ENCODE measurements at regions of chr2 and their contacts with region 1.

Region 1: DNA sequence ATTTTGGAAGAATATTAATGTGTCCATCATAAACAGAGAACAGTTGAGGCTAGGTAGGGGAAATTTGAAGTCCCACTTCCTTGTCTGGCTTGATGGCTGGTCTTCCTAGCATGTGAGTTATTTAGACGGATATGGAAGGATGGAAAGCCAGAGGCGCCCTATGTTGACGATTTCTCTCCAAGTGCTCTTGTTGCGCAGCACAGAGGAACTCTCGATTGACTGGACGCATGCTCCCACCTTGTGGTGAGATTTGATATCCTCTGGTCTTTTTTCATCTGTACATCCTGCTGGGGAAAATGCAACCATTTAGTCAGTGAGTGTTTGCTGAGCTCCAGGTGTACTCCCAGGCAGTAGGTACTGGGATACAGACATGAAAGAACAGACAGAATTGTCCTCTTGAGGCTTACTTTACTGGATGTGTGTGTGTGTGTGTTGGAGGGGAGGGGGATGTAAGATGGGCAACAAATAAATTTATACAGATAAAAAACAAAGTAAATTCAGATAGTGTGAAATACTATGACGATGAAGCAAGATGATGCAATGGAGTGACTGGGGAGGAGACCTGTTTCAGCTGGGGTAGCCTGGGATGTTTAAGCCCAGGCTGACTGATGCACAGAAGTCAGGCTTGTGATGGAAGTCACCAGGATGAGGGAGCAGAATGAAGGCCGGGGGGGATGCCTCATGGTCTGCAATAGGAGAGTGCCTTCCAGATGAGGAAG is 137.2 kb downstream of the TRIM43 start:
- DNase-seq: peak; percentile 75
- H3K4me3 ChIP-seq: no peak overlapping the region
- H3K27ac ChIP-seq: no peak overlapping the region
- H3K4me1 ChIP-seq: no peaks in the 10 kb centered on the region
- H3K27me3 ChIP-seq: peaks cover 2% of the 10 kb centered on the region
- CTCF ChIP-seq: peak; percentile 44 to 69

Region 2: DNA sequence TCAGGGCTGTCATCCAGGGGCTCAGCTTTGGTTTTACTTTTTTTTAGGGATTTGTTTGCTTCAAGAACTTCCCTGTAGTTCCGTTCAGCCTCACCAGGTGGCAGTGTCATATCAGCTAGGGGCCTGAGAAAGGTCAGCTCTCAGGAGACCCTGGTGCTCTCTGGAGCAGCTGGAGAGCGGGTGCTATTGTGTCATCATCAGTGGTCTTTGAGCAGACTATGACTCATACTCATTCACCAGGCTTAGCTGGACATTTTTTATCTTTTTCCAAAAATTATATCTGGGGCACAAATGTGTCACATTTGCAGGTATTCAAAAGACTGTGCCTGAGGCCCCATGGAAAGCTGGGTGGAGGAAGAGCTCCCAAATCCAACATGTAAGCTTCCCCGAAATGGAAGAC is 497.3 kb before region 1 on chr2:
- CTCF ChIA-PET with region 1: no interaction called
- dilution Hi-C with region 1: no loop called
- in situ Hi-C with region 1: no loop called
- intact Hi-C with region 1: loop called (anchors 2 kb)
- DNase-seq: peak; percentile 57
- H3K4me3 ChIP-seq: no peak overlapping the region
- H3K27ac ChIP-seq: no peak overlapping the region
- H3K4me1 ChIP-seq: peaks cover 8% of the 10 kb centered on the region
- H3K27me3 ChIP-seq: no peaks in the 10 kb centered on the region
- CTCF ChIP-seq: peak; percentile 94 to 99

Region 3: GRCh38 chr2:95323347-95324185 is 405.5 kb before region 1 on chr2:
- CTCF ChIA-PET with region 1: no interaction called
- dilution Hi-C with region 1: no loop called
- in situ Hi-C with region 1: no loop called
- intact Hi-C with region 1: loop called (anchors 1 kb)
- DNase-seq: peak; percentile 64
- H3K4me3 ChIP-seq: no peak overlapping the region
- H3K27ac ChIP-seq: no peak overlapping the region
- H3K4me1 ChIP-seq: no peaks in the 10 kb centered on the region
- H3K27me3 ChIP-seq: no peaks in the 10 kb centered on the region
- CTCF ChIP-seq: peak; percentile 76 to 91

Region 4: DNA sequence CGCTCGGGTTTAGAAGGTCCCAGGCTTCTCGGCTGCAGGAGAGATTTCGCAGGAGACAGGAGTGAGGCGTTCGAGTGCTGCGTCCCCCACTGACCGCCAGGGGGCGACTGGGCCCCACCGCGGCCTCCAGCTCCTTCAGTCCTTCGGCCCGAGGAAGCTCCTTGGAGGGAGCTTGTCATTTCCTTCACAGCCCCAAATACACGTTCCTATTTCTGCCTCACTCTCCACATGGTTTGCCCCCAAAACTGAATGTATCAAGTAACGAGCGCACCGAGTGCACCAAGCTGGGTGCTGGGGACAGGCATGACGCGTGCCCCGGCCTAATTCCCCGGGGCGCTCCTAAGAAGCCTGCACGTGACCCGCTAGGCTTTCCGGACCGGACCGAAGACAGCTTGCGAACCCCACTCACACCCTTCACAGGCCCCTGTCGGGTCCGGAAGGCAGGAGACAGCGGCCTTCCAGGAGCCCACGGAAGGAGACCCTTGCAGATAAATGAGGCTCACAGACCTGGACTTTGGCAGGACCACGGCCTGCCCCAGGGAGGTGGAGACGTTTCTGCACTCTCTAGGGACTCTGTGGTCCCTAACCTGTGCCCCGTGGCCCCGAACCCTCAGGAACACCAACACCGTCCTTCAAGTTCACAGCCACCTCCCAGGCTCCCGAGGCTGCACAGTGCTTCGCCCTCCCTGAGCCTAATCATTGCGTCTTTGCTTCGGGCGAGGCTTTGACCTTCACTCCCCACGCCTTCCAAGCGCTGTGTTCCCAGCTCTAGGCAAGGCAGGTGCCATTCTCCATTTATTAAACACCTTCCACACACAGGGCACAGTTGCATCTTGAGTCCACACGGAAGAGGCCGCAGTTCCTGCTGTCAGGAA is 339.6 kb before region 1 on chr2:
- CTCF ChIA-PET with region 1: no interaction called
- dilution Hi-C with region 1: no loop called
- in situ Hi-C with region 1: no loop called
- intact Hi-C with region 1: loop called (anchors 1 kb)
- DNase-seq: peak; percentile 38
- H3K4me3 ChIP-seq: no peak overlapping the region
- H3K27ac ChIP-seq: no peak overlapping the region
- H3K4me1 ChIP-seq: no peaks in the 10 kb centered on the region
- H3K27me3 ChIP-seq: no peaks in the 10 kb centered on the region
- CTCF ChIP-seq: peak; percentile 92 to 95

Region 5: DNA sequence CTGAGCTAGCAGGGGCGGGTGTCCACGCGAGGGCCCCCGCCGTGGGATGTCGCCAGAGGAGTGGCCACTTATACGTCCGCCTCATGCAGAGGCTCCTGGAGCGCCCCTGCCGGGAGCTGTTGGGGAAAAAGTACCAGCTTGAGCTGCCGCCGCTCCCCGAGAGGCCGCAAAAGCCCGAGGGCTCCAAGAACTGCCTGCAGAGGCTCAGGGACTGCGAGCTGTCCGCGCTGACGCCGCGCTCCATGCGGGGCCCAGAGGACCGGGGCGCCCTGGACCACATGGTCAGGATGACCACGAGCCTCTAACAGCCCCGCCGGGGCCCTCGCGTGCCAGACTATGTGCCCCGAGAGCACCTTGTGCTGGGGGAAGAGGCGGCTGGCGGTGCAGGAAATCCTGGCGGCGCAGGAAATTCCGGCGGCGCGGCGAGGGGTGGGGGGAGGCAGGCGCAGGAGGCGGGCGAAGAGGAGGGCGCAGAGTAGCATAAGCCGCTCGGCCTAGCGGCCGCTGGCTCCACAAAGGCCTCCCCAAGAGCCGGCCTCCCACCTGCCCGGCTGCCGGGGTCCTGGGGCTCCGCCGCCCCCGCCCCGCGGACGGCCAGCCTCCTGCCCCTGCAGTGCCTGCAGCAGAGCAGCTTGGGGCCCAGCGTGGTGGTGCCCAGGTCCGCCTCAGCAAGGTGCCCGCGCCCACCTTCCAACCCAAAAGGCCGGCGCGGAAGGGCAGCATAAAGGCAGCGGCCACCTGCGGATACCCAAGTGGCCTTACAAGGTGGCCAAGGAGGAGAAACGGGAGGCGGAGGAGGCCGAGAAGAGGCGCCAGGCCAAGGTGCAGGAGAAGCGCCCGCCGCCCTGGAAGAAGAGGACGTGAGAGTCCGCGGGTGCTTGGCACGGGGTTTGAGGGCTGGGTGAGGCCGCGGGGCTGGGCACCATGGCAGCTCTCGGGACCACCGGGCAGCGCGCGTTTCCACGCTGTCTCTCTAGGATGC is 202.4 kb before region 1 on chr2:
- CTCF ChIA-PET with region 1: no interaction called
- dilution Hi-C with region 1: no loop called
- in situ Hi-C with region 1: no loop called
- intact Hi-C with region 1: no loop called
- DNase-seq: peak; percentile 69
- H3K4me3 ChIP-seq: peak overlapping the region; percentile 60 to 87 (median 82)
- H3K27ac ChIP-seq: peak overlapping the region; percentile 20
- H3K4me1 ChIP-seq: peaks cover 10% of the 10 kb centered on the region
- H3K27me3 ChIP-seq: no peaks in the 10 kb centered on the region
- CTCF ChIP-seq: peak in 1 of 2 donors; percentile 19

Region 6: DNA sequence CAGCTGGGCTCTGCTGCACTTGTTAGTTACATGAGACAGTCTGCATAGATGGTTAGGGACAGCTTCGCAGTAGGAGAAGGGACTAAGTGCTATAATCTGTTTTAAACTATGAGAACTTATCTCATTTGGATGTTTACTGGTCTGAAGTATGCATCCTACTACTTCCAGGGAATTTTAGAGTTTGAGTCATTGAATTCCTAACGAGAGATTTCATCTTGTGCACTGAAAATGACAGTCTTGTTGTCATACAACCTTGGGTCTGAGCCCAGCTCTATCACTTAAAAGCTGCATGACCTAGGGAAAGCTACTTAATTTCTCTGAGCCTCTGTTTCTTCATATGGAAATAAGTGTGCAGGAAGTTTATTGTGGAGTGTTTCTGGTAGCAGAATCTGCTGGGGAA is 58.9 kb before region 1 on chr2:
- CTCF ChIA-PET with region 1: no interaction called
- dilution Hi-C with region 1: no loop called
- in situ Hi-C with region 1: no loop called
- intact Hi-C with region 1: loop called (anchors 1 kb)
- DNase-seq: no peak
- H3K4me3 ChIP-seq: no peak overlapping the region
- H3K27ac ChIP-seq: no peak overlapping the region
- H3K4me1 ChIP-seq: peaks cover 3% of the 10 kb centered on the region
- H3K27me3 ChIP-seq: no peaks in the 10 kb centered on the region
- CTCF ChIP-seq: no peak

Region 7: GRCh38 chr2:95685513-95685912 is 43.5 kb before region 1 on chr2:
- CTCF ChIA-PET with region 1: no interaction called
- dilution Hi-C with region 1: no loop called
- in situ Hi-C with region 1: no loop called
- intact Hi-C with region 1: no loop called
- DNase-seq: no peak
- H3K4me3 ChIP-seq: no peak overlapping the region
- H3K27ac ChIP-seq: no peak overlapping the region
- H3K4me1 ChIP-seq: peaks cover 8% of the 10 kb centered on the region
- H3K27me3 ChIP-seq: no peaks in the 10 kb centered on the region
- CTCF ChIP-seq: no peak

Measured in mammary epithelial cell (primary cell).